ENCODE measurements at regions of chr15 and their contacts with region 1.

Region 1: GRCh38 chr15:93030430-93031105 is 58.4 kb downstream of the RGMA start:
- DNase-seq: peak; percentile 72 to 84 (median 82)
- ATAC-seq: peak; percentile 58 to 65
- H3K4me3 ChIP-seq: no peak overlapping the region
- H3K27ac ChIP-seq: no peak overlapping the region
- H3K4me1 ChIP-seq: peaks cover 22% of the 10 kb centered on the region
- H3K27me3 ChIP-seq: no peaks in the 10 kb centered on the region

Region 2: DNA sequence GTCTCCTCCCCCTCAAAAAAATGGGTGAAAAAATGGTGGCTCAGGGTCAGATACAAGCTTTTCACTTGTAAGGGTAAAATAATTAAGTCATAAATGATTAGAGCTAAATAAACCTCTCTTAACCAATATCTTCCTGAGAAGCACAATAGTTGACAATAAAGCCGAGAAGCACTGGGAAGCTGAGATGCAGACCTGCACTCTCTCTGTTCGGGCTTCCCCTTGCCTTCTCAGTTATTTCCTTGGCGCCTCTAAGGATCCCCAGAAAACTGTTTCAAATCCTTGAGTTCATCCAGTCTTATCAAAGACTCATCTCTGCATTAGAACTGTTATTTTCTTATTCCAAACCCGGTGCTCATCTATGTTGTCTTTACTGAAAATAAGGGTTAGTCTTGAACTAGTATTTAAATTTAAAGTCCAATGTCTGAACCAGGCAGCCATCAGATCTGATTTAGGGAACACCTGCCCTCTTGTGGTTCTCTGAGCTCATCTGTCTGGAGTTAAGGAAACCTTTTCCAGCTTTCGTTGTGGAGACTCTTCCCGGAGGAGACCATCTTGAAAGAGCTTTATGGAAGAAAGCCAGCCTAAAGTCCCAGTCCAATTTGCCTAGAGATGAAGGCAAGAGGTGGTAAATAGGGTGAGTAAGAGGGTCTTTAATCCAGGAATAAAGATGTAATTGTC is 944.4 kb after region 1 on chr15:
- intact Hi-C with region 1: loop called in 1 of 4 experiments (anchors 10 kb)
- DNase-seq: no peak
- ATAC-seq: no peak
- H3K4me3 ChIP-seq: no peak overlapping the region
- H3K27ac ChIP-seq: no peak overlapping the region
- H3K4me1 ChIP-seq: no peaks in the 10 kb centered on the region
- H3K27me3 ChIP-seq: no peaks in the 10 kb centered on the region

Region 3: DNA sequence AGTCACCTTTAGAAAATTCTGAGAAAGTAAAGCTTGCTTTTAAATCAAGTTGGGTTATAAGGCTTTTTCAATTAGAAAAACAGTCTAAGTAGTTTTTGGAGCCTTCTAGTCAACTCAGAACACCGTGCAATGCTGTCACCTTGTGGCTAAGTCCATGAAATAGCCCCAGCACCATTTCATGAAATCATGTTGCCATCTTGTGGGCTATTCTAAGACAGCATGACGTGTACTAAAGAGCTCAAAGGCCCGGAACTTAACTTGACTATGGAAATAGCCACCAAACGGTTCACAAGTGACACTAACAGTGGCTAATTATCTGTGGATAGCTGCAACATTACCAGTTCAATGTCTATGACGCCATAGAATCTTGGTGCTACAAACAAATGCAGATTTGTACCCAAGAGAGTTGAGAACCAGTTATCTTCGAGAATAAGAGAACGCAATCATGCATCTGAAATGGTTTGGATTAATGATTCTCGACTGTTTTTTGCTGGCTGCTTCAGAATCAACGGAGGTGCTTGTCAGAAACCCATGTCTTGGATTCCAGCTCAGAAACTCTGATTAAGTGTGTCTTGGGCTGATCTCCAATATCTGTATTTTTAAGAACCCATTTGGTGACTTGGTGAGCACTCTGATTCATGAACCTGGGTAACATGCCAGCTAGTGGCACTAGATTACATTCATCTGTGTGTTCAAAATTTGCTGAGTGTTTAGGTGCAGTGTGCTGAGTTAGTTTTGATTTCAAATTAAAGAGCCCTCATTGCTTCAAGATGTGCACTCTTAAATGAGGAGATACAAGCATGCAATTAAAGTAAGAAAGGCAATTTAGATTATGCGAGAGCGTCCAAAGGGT is 1089.6 kb after region 1 on chr15:
- intact Hi-C with region 1: loop called (anchors 5 to 10 kb)
- DNase-seq: peak; percentile 41 to 69 (median 43)
- ATAC-seq: peak; percentile 95 to 96
- H3K4me3 ChIP-seq: no peak overlapping the region
- H3K27ac ChIP-seq: no peak overlapping the region
- H3K4me1 ChIP-seq: no peaks in the 10 kb centered on the region
- H3K27me3 ChIP-seq: no peaks in the 10 kb centered on the region

Measured in right cardiac atrium (tissue), 5 donors.